ENCODE measurements at regions of chr4 and their contacts with region 1.

Region 1: DNA sequence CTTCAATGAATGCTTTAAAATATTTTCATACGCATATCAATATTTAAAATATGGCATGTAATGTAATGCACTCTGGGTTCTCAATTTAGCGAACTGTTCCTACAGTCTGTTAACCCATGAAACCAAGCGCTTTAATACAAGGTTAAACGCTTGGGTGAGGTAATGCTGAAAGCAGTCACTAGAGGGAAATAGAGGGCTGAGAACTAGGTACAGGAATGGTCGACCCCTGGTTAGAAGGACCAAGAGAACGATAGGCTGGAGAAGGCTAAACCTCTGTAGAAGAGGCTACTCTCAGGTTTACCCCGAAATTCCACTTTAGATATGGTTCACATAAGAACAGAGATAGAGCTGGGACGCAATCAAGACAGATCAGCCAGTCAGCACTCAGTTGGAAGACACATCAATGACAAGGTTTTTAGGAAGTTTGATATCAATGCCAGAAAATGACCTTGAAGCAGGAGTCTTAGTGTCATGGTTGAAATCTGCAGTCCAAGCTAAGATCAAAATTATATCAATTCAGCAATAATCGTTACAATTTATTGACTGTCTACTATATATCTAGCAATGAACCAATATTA is 26.9 kb downstream of the ARSJ start:
- DNase-seq: peak; percentile 12
- ATAC-seq: peak; percentile 94
- H3K4me3 ChIP-seq: no peak overlapping the region
- H3K27ac ChIP-seq: no peak overlapping the region
- H3K4me1 ChIP-seq: no peaks in the 10 kb centered on the region
- H3K27me3 ChIP-seq: no peaks in the 10 kb centered on the region
- CTCF ChIP-seq: peak; percentile 69 to 84 (median 71)
- EP300 ChIP-seq: no peak
- POLR2A ChIP-seq: no peak
- RAD21 ChIP-seq: peak; percentile 85

Region 2: DNA sequence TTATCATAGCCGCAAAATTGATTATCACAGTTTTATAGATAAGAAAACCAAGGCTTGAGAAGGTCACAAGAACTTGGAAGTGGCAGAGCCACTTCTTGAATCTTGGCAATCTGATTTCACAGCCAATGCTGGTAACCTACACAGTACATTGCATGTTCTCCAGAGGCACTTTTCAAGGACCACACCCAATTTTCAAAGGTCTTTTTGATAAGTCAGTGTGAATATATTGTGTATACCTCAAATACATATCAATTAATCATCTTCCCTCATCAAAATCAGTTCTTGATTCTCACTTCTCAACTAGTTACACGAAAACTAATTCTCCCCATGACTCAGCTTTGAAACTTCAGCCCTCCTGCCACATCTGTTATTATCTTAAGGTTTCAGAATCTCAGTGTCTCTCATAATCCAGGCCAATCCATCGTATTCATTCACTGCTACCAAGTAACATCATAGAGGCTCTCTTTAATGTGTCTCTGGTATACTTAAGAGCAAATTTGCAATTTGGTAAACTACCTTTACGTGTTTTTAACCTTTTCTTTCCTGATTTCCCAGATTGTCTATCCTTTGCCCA is 207.8 kb before region 1 on chr4:
- CTCF ChIA-PET with region 1: no interaction called
- POLR2A ChIA-PET with region 1: no interaction called
- RAD21 ChIA-PET with region 1: no interaction called
- SMC1A ChIA-PET with region 1: no interaction called
- in situ Hi-C with region 1: no loop called
- intact Hi-C with region 1: no loop called
- DNase-seq: no peak
- ATAC-seq: peak; percentile 28; the same call in 2 of the 3 replicates
- H3K4me3 ChIP-seq: no peak overlapping the region
- H3K27ac ChIP-seq: no peak overlapping the region
- H3K4me1 ChIP-seq: no peaks in the 10 kb centered on the region
- H3K27me3 ChIP-seq: no peaks in the 10 kb centered on the region
- CTCF ChIP-seq: no peak
- EP300 ChIP-seq: no peak
- POLR2A ChIP-seq: no peak
- RAD21 ChIP-seq: no peak

Region 3: DNA sequence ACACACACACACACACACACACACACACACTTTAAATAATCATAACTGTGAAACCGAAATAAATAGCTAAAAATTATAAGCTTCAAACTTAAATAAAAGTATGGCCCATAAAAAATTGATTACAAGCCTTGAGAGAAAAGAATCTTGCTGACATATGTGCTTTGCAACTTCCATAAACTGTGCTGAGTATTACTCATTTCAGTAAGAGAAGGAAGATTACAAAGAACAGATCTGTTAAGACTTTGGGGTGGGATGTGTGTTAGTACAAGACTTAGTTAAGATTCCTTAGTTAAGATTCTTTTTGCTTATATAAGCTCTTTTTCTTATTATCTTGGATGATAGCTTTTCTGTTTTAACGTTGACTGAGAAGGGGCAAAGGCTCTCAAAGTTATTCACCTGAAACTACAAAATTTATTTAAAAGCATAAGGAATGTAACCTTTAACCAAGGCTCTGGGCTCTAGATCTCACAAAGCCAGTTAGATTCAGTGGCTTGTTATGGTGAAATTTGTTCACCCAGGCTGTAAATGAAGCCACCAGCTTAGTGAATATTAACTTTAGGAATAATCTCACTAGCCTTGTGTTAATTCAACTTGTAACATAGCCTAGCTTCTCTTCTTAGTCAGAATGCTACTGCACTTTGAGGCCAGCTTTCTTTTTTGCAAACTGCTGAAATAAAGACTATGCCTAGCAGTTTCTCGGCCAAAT is 31.3 kb before region 1 on chr4:
- CTCF ChIA-PET with region 1: interaction called, 6 read pairs
- POLR2A ChIA-PET with region 1: no interaction called
- RAD21 ChIA-PET with region 1: interaction called, 3 read pairs
- SMC1A ChIA-PET with region 1: interaction called, 11 read pairs
- in situ Hi-C with region 1: no loop called
- intact Hi-C with region 1: no loop called
- DNase-seq: no peak
- ATAC-seq: peak; percentile 71
- H3K4me3 ChIP-seq: no peak overlapping the region
- H3K27ac ChIP-seq: no peak overlapping the region
- H3K4me1 ChIP-seq: no peaks in the 10 kb centered on the region
- H3K27me3 ChIP-seq: no peaks in the 10 kb centered on the region
- CTCF ChIP-seq: no peak
- EP300 ChIP-seq: no peak
- POLR2A ChIP-seq: no peak
- RAD21 ChIP-seq: no peak

Region 4: DNA sequence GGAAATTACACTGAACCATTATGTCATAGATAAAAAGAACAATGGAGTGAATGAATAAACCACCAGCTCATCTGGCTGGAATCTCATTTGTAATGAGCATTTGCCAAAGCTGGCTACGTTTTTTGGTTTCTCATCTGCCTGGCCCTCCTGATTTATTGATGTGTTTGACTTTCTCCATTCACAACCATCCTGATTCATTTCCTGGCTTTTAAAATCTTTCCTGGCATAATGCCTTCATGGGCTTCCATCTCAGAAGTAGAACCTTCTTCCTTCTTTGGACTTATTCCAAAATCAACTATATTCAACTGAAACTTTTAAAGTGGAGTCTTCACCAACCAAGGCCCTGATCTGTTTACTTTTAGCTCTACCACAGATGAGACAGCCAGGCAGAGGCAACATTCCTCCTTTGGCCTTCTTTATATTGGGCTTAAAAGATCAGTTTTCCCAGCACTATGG is 62.9 kb after region 1 on chr4:
- CTCF ChIA-PET with region 1: no interaction called
- POLR2A ChIA-PET with region 1: no interaction called
- RAD21 ChIA-PET with region 1: no interaction called
- SMC1A ChIA-PET with region 1: interaction called, 10 read pairs
- in situ Hi-C with region 1: no loop called
- intact Hi-C with region 1: no loop called
- DNase-seq: no peak
- ATAC-seq: no peak
- H3K4me3 ChIP-seq: no peak overlapping the region
- H3K27ac ChIP-seq: no peak overlapping the region
- H3K4me1 ChIP-seq: no peaks in the 10 kb centered on the region
- H3K27me3 ChIP-seq: no peaks in the 10 kb centered on the region
- CTCF ChIP-seq: no peak
- EP300 ChIP-seq: no peak
- POLR2A ChIP-seq: no peak
- RAD21 ChIP-seq: no peak

Region 5: DNA sequence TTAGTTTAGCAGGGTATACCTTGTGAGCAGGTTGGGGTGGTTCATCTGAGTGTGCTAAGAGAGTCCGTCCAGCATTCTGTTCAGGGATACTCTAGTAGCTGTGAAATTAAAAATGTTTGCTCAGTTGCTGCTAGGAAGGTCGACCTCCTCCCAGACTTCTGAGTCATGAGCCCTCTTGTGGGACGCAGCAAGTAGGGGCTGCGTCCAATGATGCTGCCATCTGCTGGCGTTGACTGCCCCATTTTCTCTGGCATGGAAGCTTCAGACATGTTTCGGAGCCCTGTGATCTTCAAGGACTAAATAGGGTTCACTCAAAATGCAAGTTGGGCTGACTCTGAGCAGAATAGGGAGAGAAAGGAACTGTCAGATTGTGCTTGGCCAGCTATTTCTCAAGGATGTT is 227.9 kb after region 1 on chr4:
- CTCF ChIA-PET with region 1: interaction called, 19 read pairs
- POLR2A ChIA-PET with region 1: no interaction called
- RAD21 ChIA-PET with region 1: interaction called, 5 read pairs
- SMC1A ChIA-PET with region 1: interaction called, 7 read pairs
- in situ Hi-C with region 1: no loop called
- intact Hi-C with region 1: loop called (anchors 1 kb)
- DNase-seq: no peak
- ATAC-seq: peak; percentile 80
- H3K4me3 ChIP-seq: no peak overlapping the region
- H3K27ac ChIP-seq: no peak overlapping the region
- H3K4me1 ChIP-seq: no peaks in the 10 kb centered on the region
- H3K27me3 ChIP-seq: no peaks in the 10 kb centered on the region
- CTCF ChIP-seq: peak; percentile 51 to 61 (median 60)
- EP300 ChIP-seq: no peak
- POLR2A ChIP-seq: no peak
- RAD21 ChIP-seq: 0 out of 2 replicates have a peak, but pooled peaks have one; percentile 24

Region 6: GRCh38 chr4:114694770-114695169 is 742.2 kb after region 1 on chr4:
- CTCF ChIA-PET with region 1: interaction called, 3 read pairs
- POLR2A ChIA-PET with region 1: no interaction called
- RAD21 ChIA-PET with region 1: no interaction called
- SMC1A ChIA-PET with region 1: interaction called, 3 read pairs
- in situ Hi-C with region 1: no loop called
- intact Hi-C with region 1: loop called (anchors 10 kb)
- DNase-seq: peak; percentile 11
- ATAC-seq: peak; percentile 48
- H3K4me3 ChIP-seq: no peak overlapping the region
- H3K27ac ChIP-seq: no peak overlapping the region
- H3K4me1 ChIP-seq: peaks cover 14% of the 10 kb centered on the region
- H3K27me3 ChIP-seq: no peaks in the 10 kb centered on the region
- CTCF ChIP-seq: peak; percentile 43 to 58 (median 44); a peak in 4 of 6 replicates
- EP300 ChIP-seq: no peak
- POLR2A ChIP-seq: no peak
- RAD21 ChIP-seq: peak; percentile 80

Measured in GM12878 (cell line).